HEK293T (cell line): ENCODE measurements at regions of chr1 and their contacts with region 1.

Region 1: GRCh38 chr1:18597160-18598042 is 33.2 kb upstream of the PAX7 start:
- DNase-seq: peak; percentile 67

Region 2: GRCh38 chr1:18542351-18542750 is 55.0 kb before region 1 on chr1:
- CTCF ChIA-PET with region 1: no interaction called
- POLR2A ChIA-PET with region 1: no interaction called
- DNase-seq: no peak

Region 3: DNA sequence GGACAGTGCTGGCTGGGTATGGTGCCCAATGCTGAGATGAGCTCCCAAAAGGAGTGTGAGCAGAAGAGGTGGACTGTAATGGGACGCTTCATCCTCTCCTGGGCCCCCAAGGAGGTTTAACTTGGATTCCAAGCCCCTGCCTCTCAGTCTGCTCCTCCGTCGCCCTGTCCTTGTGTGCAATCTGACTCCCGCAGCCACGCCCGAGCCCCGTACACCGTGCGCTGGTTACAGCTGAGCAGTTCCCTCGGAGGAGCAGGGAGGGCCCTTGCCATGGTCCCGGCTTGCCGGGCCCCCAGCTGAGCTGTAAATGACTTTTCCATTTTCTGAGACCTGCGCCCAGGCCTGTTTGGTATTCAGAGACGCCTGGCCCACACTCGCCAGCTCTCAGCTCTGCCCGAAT is 86.9 kb after region 1 on chr1:
- CTCF ChIA-PET with region 1: interaction called, 18 read pairs
- POLR2A ChIA-PET with region 1: no interaction called
- DNase-seq: no peak

Region 4: GRCh38 chr1:18820791-18821641 is 223.6 kb after region 1 on chr1:
- CTCF ChIA-PET with region 1: interaction called, 14 read pairs
- POLR2A ChIA-PET with region 1: no interaction called
- DNase-seq: peak; percentile 89